Endothelial cell of umbilical vein (primary cell): ENCODE measurements at regions of chr4 and their contacts with region 1.

Region 1: GRCh38 chr4:147943159-147943638 is 211.3 kb downstream of the ARHGAP10 start:
- DNase-seq: no peak
- H3K4me3 ChIP-seq: no peak overlapping the region
- H3K27ac ChIP-seq: no peak overlapping the region
- H3K4me1 ChIP-seq: no peaks in the 10 kb centered on the region
- H3K27me3 ChIP-seq: no peaks in the 10 kb centered on the region
- CTCF ChIP-seq: no peak
- POLR2A ChIP-seq: no peak

Region 2: GRCh38 chr4:148095346-148095923 is 152.2 kb after region 1 on chr4:
- CTCF ChIA-PET with region 1: no interaction called
- POLR2A ChIA-PET with region 1: interaction called, 12 read pairs
- dilution Hi-C with region 1: no loop called
- intact Hi-C with region 1: no loop called
- DNase-seq: no peak
- H3K4me3 ChIP-seq: no peak overlapping the region
- H3K27ac ChIP-seq: no peak overlapping the region
- H3K4me1 ChIP-seq: no peaks in the 10 kb centered on the region
- H3K27me3 ChIP-seq: no peaks in the 10 kb centered on the region
- CTCF ChIP-seq: no peak
- POLR2A ChIP-seq: no peak

Region 3: DNA sequence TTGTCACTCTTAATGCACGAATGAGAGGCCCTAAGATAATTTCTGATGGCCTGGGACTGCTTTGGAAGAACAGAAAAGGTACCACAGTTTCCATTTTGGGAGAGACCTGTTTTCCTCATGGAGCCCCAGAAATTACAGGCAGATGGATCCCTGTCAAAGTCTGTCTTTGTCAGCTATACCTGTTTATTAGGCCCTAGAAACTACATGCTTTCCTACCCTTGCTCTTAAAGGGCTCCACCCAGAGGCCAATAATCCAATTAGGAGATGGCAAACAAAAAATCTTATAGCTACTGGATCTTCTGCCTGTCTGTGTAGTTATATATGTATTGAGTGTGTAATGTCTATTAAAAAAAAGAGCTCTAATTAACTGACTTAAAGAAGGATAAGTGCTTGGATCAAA is 357.7 kb after region 1 on chr4:
- CTCF ChIA-PET with region 1: no interaction called
- POLR2A ChIA-PET with region 1: no interaction called
- dilution Hi-C with region 1: no loop called
- intact Hi-C with region 1: no loop called
- DNase-seq: no peak
- H3K4me3 ChIP-seq: no peak overlapping the region
- H3K27ac ChIP-seq: no peak overlapping the region
- H3K4me1 ChIP-seq: no peaks in the 10 kb centered on the region
- H3K27me3 ChIP-seq: no peaks in the 10 kb centered on the region
- CTCF ChIP-seq: no peak
- POLR2A ChIP-seq: no peak